ENCODE measurements at regions of chr9 and their contacts with region 1.

Region 1: GRCh38 chr9:77177161-77177893 is at the start of gene VPS13A:
- DNase-seq: peak; percentile 89 to 96 (median 89)
- H3K4me3 ChIP-seq: peak within 1 kb of the TSS; percentile 77 to 79
- H3K4me3 Mint-ChIP-seq: peak within 1 kb of the TSS; percentile 90 to 98 (median 96)
- H3K27ac ChIP-seq: peak within 1 kb of the TSS; percentile 92
- H3K27ac Mint-ChIP-seq: peak within 1 kb of the TSS; percentile 92 to 98 (median 94)
- H3K4me1 ChIP-seq: peaks cover 28% of the 10 kb centered on the region
- H3K4me1 Mint-ChIP-seq: peaks cover 20 to 46% (median 28%) of the 10 kb centered on the region in 4 donors
- H3K27me3 ChIP-seq: no peaks in the 10 kb centered on the region
- H3K27me3 Mint-ChIP-seq: no peaks in the 10 kb centered on the region
- total RNA-seq, gene VPS13A: 53.5 to 58.2 TPM

Region 2: GRCh38 chr9:75890472-75891276 is 1286.7 kb before region 1 on chr9 and contains the start of gene PCSK5:
- CTCF ChIA-PET with region 1: no interaction called
- POLR2A ChIA-PET with region 1: no interaction called
- intact Hi-C with region 1: loop called (anchors 5 kb)
- DNase-seq: peak; percentile 81 to 91 (median 84)
- H3K4me3 ChIP-seq: peak within 1 kb of the TSS; percentile 58 to 79
- H3K4me3 Mint-ChIP-seq: peak within 1 kb of the TSS; percentile 93 to 98 (median 94)
- H3K27ac ChIP-seq: peak within 1 kb of the TSS; percentile 59
- H3K27ac Mint-ChIP-seq: peak within 1 kb of the TSS; percentile 76 to 94 (median 93)
- H3K4me1 ChIP-seq: peaks cover 24% of the 10 kb centered on the region
- H3K4me1 Mint-ChIP-seq: peaks cover 22 to 51% (median 37%) of the 10 kb centered on the region in 4 donors
- H3K27me3 ChIP-seq: no peaks in the 10 kb centered on the region
- H3K27me3 Mint-ChIP-seq: peaks cover 2 to 7% of the 10 kb centered on the region in 2 donors
- total RNA-seq, gene PCSK5: 7.9 to 8.4 TPM

Region 3: DNA sequence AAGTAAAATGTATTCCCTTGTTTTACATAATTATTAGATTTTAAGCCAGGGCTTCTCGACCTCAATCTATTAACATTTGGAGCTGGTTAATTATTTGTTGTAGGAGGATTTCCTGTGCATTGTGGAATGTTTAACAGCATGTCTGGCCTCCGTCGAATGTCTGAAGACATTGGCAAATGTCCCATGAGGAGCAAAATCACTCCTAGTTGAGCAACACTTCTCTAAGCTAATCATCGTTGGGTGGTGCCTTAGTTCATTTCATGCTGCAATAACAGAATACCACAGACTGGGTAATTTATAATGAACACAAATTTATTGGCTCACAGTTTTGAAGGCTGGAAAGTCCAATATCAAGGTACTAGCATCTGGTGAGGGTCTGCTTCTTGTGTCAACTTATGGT is 13.4 kb before region 1 on chr9:
- CTCF ChIA-PET with region 1: interaction called, 27 read pairs
- POLR2A ChIA-PET with region 1: interaction called, 7 read pairs
- intact Hi-C with region 1: loop called (anchors 1 kb)
- DNase-seq: no peak
- H3K4me3 ChIP-seq: no peak overlapping the region
- H3K4me3 Mint-ChIP-seq: no peak overlapping the region
- H3K27ac ChIP-seq: no peak overlapping the region
- H3K27ac Mint-ChIP-seq: no peak overlapping the region
- H3K4me1 ChIP-seq: no peaks in the 10 kb centered on the region
- H3K4me1 Mint-ChIP-seq: peaks cover 0 to 4% (median 2%) of the 10 kb centered on the region in 4 donors
- H3K27me3 ChIP-seq: no peaks in the 10 kb centered on the region
- H3K27me3 Mint-ChIP-seq: peaks cover 5 to 7% of the 10 kb centered on the region in 2 donors

Region 4: GRCh38 chr9:77284616-77285015 is 107.3 kb after region 1 on chr9:
- CTCF ChIA-PET with region 1: no interaction called
- POLR2A ChIA-PET with region 1: no interaction called
- intact Hi-C with region 1: loop called (anchors 5 kb)
- DNase-seq: no peak
- H3K4me3 ChIP-seq: no peak overlapping the region
- H3K4me3 Mint-ChIP-seq: no peak overlapping the region
- H3K27ac ChIP-seq: no peak overlapping the region
- H3K27ac Mint-ChIP-seq: no peak overlapping the region
- H3K4me1 ChIP-seq: no peaks in the 10 kb centered on the region
- H3K4me1 Mint-ChIP-seq: peaks cover 0 to 1% (median 0%) of the 10 kb centered on the region in 4 donors
- H3K27me3 ChIP-seq: no peaks in the 10 kb centered on the region
- H3K27me3 Mint-ChIP-seq: no peaks in the 10 kb centered on the region

Region 5: DNA sequence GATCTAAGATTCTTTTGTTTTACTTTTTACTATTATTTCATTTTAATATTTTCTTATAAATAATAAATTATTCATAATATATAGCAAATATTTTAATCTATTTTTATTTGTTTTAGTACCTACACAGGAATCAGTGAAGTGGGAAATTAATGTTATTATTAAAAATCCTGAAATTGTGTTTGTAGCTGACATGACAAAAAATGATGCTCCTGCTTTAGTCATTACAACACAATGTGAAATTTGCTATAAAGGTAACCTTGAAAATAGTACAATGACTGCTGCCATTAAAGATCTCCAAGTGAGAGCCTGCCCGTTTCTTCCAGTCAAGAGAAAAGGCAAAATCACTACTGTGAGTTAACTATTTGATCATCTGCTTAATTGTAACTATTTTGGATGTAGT is 138.7 kb after region 1 on chr9:
- CTCF ChIA-PET with region 1: no interaction called
- POLR2A ChIA-PET with region 1: no interaction called
- intact Hi-C with region 1: no loop called
- DNase-seq: no peak
- H3K4me3 ChIP-seq: no peak overlapping the region
- H3K4me3 Mint-ChIP-seq: no peak overlapping the region
- H3K27ac ChIP-seq: no peak overlapping the region
- H3K27ac Mint-ChIP-seq: no peak overlapping the region
- H3K4me1 ChIP-seq: no peaks in the 10 kb centered on the region
- H3K4me1 Mint-ChIP-seq: no peaks in the 10 kb centered on the region
- H3K27me3 ChIP-seq: no peaks in the 10 kb centered on the region
- H3K27me3 Mint-ChIP-seq: no peaks in the 10 kb centered on the region

Region 6: DNA sequence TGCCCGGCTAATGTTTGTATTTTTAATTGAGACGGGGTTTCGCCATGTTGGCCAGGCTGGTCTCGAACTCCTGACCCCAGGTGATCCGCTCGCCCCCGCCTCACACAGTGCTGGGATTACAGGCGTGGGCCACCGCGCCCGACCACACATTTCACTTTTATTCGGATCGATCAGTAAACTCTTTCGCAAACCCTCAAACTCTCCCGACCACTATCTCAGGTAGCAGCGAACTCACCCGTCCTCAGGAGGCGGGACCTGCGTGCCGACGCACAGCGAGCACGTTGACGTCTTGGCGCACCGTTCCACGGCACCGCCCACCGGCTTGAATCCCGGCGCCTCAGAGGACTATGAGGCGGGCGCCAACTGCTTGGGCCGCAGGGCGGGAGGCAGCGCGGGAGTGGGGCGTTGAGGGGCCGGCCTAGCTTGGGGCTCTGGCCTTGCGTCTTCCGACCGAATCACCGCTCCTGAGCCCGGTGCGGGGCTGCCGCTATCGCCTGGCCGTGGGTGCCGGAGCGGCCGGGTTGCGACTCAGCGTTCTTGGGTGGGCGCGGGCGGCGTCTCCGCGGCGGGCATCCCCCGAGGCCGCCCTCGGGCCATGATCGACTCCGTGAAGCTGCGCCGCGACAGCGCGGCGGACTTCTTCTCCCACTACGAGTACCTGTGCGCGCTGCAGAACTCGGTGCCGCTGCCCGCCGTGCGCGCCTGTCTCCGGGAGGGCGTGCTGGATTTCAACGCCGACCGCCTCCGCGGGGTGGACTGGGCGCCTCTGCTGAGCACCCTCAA is 1058.6 kb after region 1 on chr9 and contains the start of gene CEP78:
- CTCF ChIA-PET with region 1: no interaction called
- POLR2A ChIA-PET with region 1: no interaction called
- intact Hi-C with region 1: loop called (anchors 1 kb)
- DNase-seq: peak; percentile 82 to 88 (median 85)
- H3K4me3 ChIP-seq: peak within 1 kb of the TSS; percentile 37 to 89
- H3K4me3 Mint-ChIP-seq: peak within 1 kb of the TSS in 3 of 8 donors; percentile 92 to 98 (median 97)
- H3K27ac ChIP-seq: peak within 1 kb of the TSS; percentile 81
- H3K27ac Mint-ChIP-seq: peak within 1 kb of the TSS; percentile 88 to 99 (median 96)
- H3K4me1 ChIP-seq: peaks cover 40% of the 10 kb centered on the region
- H3K4me1 Mint-ChIP-seq: peaks cover 30 to 35% (median 32%) of the 10 kb centered on the region in 4 donors
- H3K27me3 ChIP-seq: no peaks in the 10 kb centered on the region
- H3K27me3 Mint-ChIP-seq: no peaks in the 10 kb centered on the region
- total RNA-seq, gene CEP78: 25.3 to 27.6 TPM